Heart right ventricle (tissue), 16 donors: ENCODE measurements at regions of chr3 and their contacts with region 1.

Region 1: GRCh38 chr3:146065573-146066006 is 95.4 kb downstream of the PLOD2 start:
- DNase-seq: peak in 1 of 2 donors; percentile 40
- ATAC-seq: no peak
- H3K4me3 ChIP-seq: no peak overlapping the region
- H3K27ac ChIP-seq: no peak overlapping the region
- H3K4me1 ChIP-seq: no peaks in the 10 kb centered on the region
- H3K27me3 ChIP-seq: no peaks in the 10 kb centered on the region
- CTCF ChIP-seq: peak; percentile 61 to 92 (median 81)

Region 2: DNA sequence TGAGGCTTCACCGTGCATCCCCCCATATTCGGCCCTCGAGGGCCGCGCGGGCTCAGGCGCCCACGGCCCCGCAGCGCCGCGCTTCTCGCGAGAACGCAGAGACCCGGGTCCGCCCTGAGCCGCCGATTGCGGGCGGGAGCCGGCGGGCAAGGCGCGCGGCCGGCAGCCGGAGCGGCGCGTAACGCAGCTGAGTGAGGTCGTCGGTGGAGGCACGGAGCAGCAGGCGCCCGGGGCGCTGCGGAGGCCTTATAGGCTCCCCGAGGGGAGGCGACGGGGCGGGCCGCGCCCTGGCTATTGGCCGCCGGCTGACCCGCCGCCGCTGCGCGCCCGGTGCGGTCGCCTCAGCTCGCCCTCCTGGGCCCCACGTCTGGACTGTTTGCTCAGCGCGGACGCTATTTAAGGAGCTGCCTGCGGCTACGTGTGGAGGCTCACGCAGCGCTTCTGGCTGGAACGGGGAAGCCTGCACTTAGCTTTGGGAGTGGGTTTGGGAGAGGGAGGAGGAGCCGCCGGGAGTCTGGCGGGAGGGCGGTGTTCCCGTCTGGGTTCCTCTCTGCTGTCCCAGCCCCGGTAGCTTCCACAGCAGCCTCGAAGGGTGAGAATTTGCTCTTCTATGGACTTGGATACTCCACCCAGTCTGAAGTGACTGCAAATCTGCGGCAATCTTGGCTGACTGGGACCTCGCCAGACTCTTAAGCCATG is 95.5 kb after region 1 on chr3 and contains the start of gene PLOD2:
- intact Hi-C with region 1: loop called in 3 of 10 experiments (anchors 5 to 10 kb)
- DNase-seq: peak; percentile 72 to 82
- ATAC-seq: peak; percentile 72 to 95 (median 80)
- H3K4me3 ChIP-seq: peak within 1 kb of the TSS; percentile 61 to 88 (median 78)
- H3K27ac ChIP-seq: peak within 1 kb of the TSS; percentile 89 to 98 (median 94)
- H3K4me1 ChIP-seq: peaks cover 0 to 63% (median 44%) of the 10 kb centered on the region in 9 donors
- H3K27me3 ChIP-seq: peaks cover 0 to 32% (median 0%) of the 10 kb centered on the region in 7 donors
- CTCF ChIP-seq: no peak
- total RNA-seq, gene PLOD2: 12.5 to 44.6 (median 16.8) TPM

Region 3: GRCh38 chr3:146189519-146190173 is 124.1 kb after region 1 on chr3:
- intact Hi-C with region 1: loop called (anchors 1 to 5 kb)
- DNase-seq: no peak
- ATAC-seq: peak in 6 of 8 donors; percentile 57 to 81 (median 68)
- H3K4me3 ChIP-seq: no peak overlapping the region
- H3K27ac ChIP-seq: no peak overlapping the region
- H3K4me1 ChIP-seq: peaks cover 0 to 8% (median 0%) of the 10 kb centered on the region in 9 donors
- H3K27me3 ChIP-seq: no peaks in the 10 kb centered on the region
- CTCF ChIP-seq: peak; percentile 56 to 85 (median 77)

Region 4: DNA sequence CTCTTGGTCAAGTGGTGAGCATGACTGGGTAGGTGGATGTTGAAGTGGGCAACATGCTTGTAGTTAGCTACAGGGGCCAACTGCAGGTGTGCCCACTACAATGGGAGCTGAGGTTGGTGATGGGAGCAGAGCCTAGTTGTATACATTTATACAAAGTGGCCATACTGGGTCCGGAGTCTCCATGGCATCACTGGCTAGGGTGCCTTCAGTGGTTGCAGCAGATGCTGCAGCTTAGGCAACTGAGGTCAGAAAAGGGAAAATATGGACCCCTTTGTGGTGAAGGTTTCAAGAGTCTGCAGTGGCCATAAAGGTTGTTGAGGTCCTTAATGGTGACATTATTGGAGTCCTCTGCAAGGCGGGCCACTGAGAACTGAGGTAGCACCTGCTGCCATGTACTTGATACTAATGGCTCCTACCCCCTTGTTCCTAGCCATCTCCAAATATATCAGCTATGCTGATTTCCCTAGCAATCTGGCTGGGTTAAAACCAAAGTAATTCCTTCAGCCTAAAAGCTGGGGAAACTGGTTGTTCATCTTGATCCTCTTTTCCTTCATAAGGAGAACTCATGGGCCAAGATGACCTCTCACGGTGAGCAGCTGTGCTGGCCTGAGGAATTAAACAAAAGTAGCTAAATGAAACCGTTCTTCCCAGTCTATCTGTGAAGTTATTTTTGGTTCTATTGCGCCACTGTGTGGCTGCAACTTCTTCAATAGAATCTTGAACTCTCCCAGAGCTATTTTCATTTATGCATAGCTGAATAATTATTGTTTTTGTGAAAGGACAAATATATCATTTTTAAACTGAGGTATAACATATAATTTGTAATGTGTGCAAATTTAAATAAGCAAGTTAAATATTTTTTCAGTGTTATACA is 261.3 kb after region 1 on chr3:
- intact Hi-C with region 1: loop called (anchors 2 to 10 kb)
- DNase-seq: peak in 1 of 2 donors; percentile 46
- ATAC-seq: peak in 7 of 8 donors; percentile 75 to 92 (median 87)
- H3K4me3 ChIP-seq: no peak overlapping the region
- H3K27ac ChIP-seq: no peak overlapping the region
- H3K4me1 ChIP-seq: no peaks in the 10 kb centered on the region
- H3K27me3 ChIP-seq: no peaks in the 10 kb centered on the region
- CTCF ChIP-seq: peak; percentile 9 to 80 (median 65)

Region 5: GRCh38 chr3:146334151-146334550 is 268.6 kb after region 1 on chr3:
- intact Hi-C with region 1: loop called in 8 of 10 experiments (anchors 5 to 10 kb)
- DNase-seq: peak in 1 of 2 donors; percentile 28
- ATAC-seq: peak in 3 of 8 donors; percentile 42 to 53 (median 50)
- H3K4me3 ChIP-seq: no peak overlapping the region
- H3K27ac ChIP-seq: no peak overlapping the region
- H3K4me1 ChIP-seq: peaks cover 0 to 7% (median 0%) of the 10 kb centered on the region in 9 donors
- H3K27me3 ChIP-seq: no peaks in the 10 kb centered on the region
- CTCF ChIP-seq: peak in 7 of 9 donors; percentile 27 to 59 (median 41)

Region 6: GRCh38 chr3:146404436-146404835 is 338.8 kb after region 1 on chr3:
- intact Hi-C with region 1: no loop called
- DNase-seq: no peak
- ATAC-seq: no peak
- H3K4me3 ChIP-seq: no peak overlapping the region
- H3K27ac ChIP-seq: no peak overlapping the region
- H3K4me1 ChIP-seq: no peaks in the 10 kb centered on the region
- H3K27me3 ChIP-seq: no peaks in the 10 kb centered on the region
- CTCF ChIP-seq: no peak

Region 7: DNA sequence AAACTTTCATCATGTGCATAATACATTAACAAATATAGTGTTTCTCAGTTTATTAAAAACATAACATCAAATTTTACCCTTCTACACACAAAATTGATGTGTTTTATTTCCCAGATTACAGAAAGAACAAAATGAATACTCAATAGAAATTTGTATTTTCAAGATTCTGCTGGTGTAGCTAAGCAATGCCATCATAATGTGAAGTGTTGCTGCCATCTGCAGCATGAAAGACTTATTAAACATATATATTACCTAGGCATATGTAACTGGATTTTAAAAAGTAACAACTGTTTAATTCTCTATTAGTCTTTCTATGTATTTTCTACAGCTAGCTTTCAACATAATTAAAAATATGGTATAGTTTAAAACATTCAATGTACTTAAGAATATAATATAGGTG is 512.1 kb after region 1 on chr3:
- intact Hi-C with region 1: loop called in 3 of 10 experiments (anchors 5 to 10 kb)
- DNase-seq: peak in 1 of 2 donors; percentile 19
- ATAC-seq: peak in 2 of 8 donors; percentile 51 to 56
- H3K4me3 ChIP-seq: no peak overlapping the region
- H3K27ac ChIP-seq: no peak overlapping the region
- H3K4me1 ChIP-seq: no peaks in the 10 kb centered on the region
- H3K27me3 ChIP-seq: no peaks in the 10 kb centered on the region
- CTCF ChIP-seq: peak in 7 of 9 donors; percentile 35 to 66 (median 58)

Region 8: GRCh38 chr3:146589899-146590508 is 524.4 kb after region 1 on chr3:
- intact Hi-C with region 1: loop called in 1 of 10 experiments (anchors 10 kb)
- DNase-seq: peak in 1 of 2 donors; percentile 16
- ATAC-seq: no peak
- H3K4me3 ChIP-seq: no peak overlapping the region
- H3K27ac ChIP-seq: no peak overlapping the region
- H3K4me1 ChIP-seq: no peaks in the 10 kb centered on the region
- H3K27me3 ChIP-seq: no peaks in the 10 kb centered on the region
- CTCF ChIP-seq: peak in 7 of 9 donors; percentile 52 to 69 (median 57)